Endothelial cell of umbilical vein (primary cell): ENCODE measurements at regions of chr6 and their contacts with region 1.

Region 1: DNA sequence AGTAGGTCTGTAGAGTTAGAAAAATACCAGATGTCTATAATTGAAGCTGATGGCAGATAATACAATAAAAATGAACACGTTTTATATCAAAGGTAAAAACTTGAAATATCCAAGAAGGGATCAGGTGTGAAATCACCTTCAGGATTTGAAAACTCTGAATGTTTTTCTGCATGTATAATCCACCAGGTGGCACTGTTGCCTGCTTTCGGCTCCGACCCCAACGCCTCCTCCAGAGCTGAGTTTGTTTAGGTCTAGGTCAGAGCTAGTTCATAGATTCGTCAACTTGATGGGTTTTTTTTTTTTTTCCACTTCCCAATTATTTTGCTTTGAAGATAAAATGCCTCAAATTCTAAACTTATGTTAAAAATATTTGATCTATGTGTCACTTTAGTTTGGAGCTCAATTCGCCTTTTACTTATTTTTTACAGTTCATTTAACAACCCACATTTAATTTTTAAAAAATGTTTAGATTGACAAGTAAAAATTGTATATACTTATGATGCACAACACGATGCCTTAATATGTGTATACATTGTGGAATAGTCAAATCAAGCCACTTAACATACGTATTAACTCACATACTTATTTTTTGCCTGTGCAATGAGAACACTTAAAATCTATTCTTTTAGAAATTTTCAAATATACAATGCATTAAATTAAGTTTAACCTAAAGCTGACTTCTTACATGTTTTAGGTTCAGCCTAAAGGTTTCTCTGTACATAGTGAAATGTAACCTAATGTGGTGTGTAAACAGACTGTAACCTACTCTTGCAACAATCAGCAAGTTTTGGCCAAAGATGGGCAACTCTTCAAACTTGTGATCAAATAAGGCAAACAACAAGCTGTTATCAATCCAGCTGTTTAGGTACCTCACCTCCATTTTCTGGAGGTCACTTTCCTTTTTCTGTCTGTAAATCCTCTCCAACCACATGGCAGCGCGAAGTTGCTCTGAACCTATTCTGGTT is 39.4 kb upstream of the ENPP4 start:
- DNase-seq: peak; percentile 58
- H3K4me3 ChIP-seq: no peak overlapping the region
- H3K27ac ChIP-seq: no peak overlapping the region
- H3K4me1 ChIP-seq: no peaks in the 10 kb centered on the region
- H3K27me3 ChIP-seq: peaks cover 5 to 13% of the 10 kb centered on the region in 2 experiments
- CTCF ChIP-seq: peak; percentile 59 to 73
- POLR2A ChIP-seq: no peak

Region 2: GRCh38 chr6:45946352-45946751 is 144.0 kb before region 1 on chr6:
- CTCF ChIA-PET with region 1: no interaction called
- POLR2A ChIA-PET with region 1: no interaction called
- dilution Hi-C with region 1: no loop called
- intact Hi-C with region 1: no loop called
- DNase-seq: no peak
- H3K4me3 ChIP-seq: no peak overlapping the region
- H3K27ac ChIP-seq: no peak overlapping the region
- H3K4me1 ChIP-seq: no peaks in the 10 kb centered on the region
- H3K27me3 ChIP-seq: no peaks in the 10 kb centered on the region
- CTCF ChIP-seq: no peak
- POLR2A ChIP-seq: no peak

Region 3: DNA sequence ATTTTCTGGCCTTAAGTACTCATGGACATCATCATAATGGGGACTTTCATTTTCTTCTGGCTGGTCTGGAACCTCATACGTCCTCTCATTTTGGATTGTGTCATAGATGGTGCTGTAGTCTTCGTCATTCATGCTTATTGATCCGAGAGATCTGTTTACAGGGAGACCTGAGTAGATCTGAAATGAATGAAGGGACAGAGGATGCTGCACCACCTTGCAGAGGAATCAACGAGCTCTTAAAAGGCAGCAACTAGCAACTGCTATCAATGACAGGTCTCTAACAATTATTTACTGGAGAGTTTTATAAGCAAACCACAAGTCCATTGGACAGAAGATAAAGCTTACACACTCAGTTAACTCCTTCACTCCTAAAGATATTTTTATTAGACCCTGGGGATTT is 10.3 kb before region 1 on chr6:
- CTCF ChIA-PET with region 1: interaction called, 29 read pairs
- POLR2A ChIA-PET with region 1: no interaction called
- dilution Hi-C with region 1: no loop called
- intact Hi-C with region 1: no loop called
- DNase-seq: no peak
- H3K4me3 ChIP-seq: no peak overlapping the region
- H3K27ac ChIP-seq: no peak overlapping the region
- H3K4me1 ChIP-seq: no peaks in the 10 kb centered on the region
- H3K27me3 ChIP-seq: peaks cover 0 to 3% of the 10 kb centered on the region in 2 experiments
- CTCF ChIP-seq: no peak
- POLR2A ChIP-seq: no peak

Region 4: GRCh38 chr6:46410334-46410953 is 320.0 kb after region 1 on chr6:
- CTCF ChIA-PET with region 1: interaction called, 174 read pairs
- POLR2A ChIA-PET with region 1: no interaction called
- dilution Hi-C with region 1: no loop called
- intact Hi-C with region 1: loop called (anchors 1 kb)
- DNase-seq: peak; percentile 50
- H3K4me3 ChIP-seq: no peak overlapping the region
- H3K27ac ChIP-seq: no peak overlapping the region
- H3K4me1 ChIP-seq: no peaks in the 10 kb centered on the region
- H3K27me3 ChIP-seq: peaks cover 0 to 9% of the 10 kb centered on the region in 2 experiments
- CTCF ChIP-seq: peak; percentile 40 to 43
- POLR2A ChIP-seq: no peak

Region 5: GRCh38 chr6:46626228-46626909 is 536.0 kb after region 1 on chr6:
- CTCF ChIA-PET with region 1: no interaction called
- POLR2A ChIA-PET with region 1: no interaction called
- dilution Hi-C with region 1: no loop called
- intact Hi-C with region 1: loop called (anchors 1 kb)
- DNase-seq: peak; percentile 27
- H3K4me3 ChIP-seq: no peak overlapping the region
- H3K27ac ChIP-seq: no peak overlapping the region
- H3K4me1 ChIP-seq: no peaks in the 10 kb centered on the region
- H3K27me3 ChIP-seq: no peaks in the 10 kb centered on the region
- CTCF ChIP-seq: peak in 1 of 2 donors; percentile 16
- POLR2A ChIP-seq: no peak

Region 6: GRCh38 chr6:46781478-46782378 is 691.3 kb after region 1 on chr6:
- CTCF ChIA-PET with region 1: interaction called, 4 read pairs
- POLR2A ChIA-PET with region 1: no interaction called
- dilution Hi-C with region 1: no loop called
- intact Hi-C with region 1: loop called (anchors 1 kb)
- DNase-seq: peak; percentile 63
- H3K4me3 ChIP-seq: no peak overlapping the region
- H3K27ac ChIP-seq: no peak overlapping the region
- H3K4me1 ChIP-seq: no peaks in the 10 kb centered on the region
- H3K27me3 ChIP-seq: peaks cover 0 to 4% of the 10 kb centered on the region in 2 experiments
- CTCF ChIP-seq: peak; percentile 50 to 60
- POLR2A ChIP-seq: no peak